A549 (cell line): ENCODE measurements at regions of chr10 and their contacts with region 1.

Region 1: GRCh38 chr10:16777473-16778370 is 39.5 kb downstream of the RSU1 start:
- DNase-seq: peak; percentile 52 to 53
- ATAC-seq: peak in 1 of 2 experiments; percentile 38; a peak in 1 of 6 replicates
- H3K4me3 ChIP-seq: no peak overlapping the region
- H3K27ac ChIP-seq: no peak overlapping the region
- H3K4me1 ChIP-seq: no peaks in the 10 kb centered on the region
- CTCF ChIP-seq: peak; percentile 78
- EP300 ChIP-seq: no peak
- POLR2A ChIP-seq: no peak
- RAD21 ChIP-seq: peak; percentile 72 to 79

Region 2: GRCh38 chr10:16756561-16757222 is 21.0 kb before region 1 on chr10:
- CTCF ChIA-PET with region 1: interaction called, 11 read pairs
- POLR2A ChIA-PET with region 1: no interaction called
- DNase-seq: no peak
- ATAC-seq: no peak
- H3K4me3 ChIP-seq: no peak overlapping the region
- H3K27ac ChIP-seq: no peak overlapping the region
- H3K4me1 ChIP-seq: no peaks in the 10 kb centered on the region
- CTCF ChIP-seq: no peak
- EP300 ChIP-seq: no peak
- POLR2A ChIP-seq: no peak
- RAD21 ChIP-seq: no peak

Region 3: DNA sequence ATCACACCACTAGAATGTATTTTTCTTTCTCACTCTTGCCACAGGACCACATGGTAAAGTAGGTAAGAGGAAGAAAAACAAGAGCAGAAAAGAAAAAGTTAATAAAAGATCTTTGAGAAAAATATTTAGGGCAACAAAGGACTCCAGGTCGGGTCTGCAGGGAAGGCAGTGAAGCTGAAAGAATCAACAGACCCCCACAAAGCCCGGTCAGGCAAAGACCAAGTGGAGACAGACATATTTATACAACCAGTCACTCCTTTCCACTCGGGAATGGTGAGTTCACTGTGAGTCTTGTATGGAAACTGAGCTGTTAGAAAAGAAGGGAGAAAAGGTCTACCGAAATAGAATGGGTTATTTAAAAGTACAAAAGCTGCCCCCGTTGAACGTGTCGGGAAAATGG is 11.5 kb after region 1 on chr10:
- CTCF ChIA-PET with region 1: interaction called, 10 read pairs
- POLR2A ChIA-PET with region 1: no interaction called
- DNase-seq: no peak
- ATAC-seq: no peak
- H3K4me3 ChIP-seq: no peak overlapping the region
- H3K27ac ChIP-seq: no peak overlapping the region
- H3K4me1 ChIP-seq: no peaks in the 10 kb centered on the region
- CTCF ChIP-seq: no peak
- EP300 ChIP-seq: no peak
- POLR2A ChIP-seq: no peak
- RAD21 ChIP-seq: no peak

Region 4: DNA sequence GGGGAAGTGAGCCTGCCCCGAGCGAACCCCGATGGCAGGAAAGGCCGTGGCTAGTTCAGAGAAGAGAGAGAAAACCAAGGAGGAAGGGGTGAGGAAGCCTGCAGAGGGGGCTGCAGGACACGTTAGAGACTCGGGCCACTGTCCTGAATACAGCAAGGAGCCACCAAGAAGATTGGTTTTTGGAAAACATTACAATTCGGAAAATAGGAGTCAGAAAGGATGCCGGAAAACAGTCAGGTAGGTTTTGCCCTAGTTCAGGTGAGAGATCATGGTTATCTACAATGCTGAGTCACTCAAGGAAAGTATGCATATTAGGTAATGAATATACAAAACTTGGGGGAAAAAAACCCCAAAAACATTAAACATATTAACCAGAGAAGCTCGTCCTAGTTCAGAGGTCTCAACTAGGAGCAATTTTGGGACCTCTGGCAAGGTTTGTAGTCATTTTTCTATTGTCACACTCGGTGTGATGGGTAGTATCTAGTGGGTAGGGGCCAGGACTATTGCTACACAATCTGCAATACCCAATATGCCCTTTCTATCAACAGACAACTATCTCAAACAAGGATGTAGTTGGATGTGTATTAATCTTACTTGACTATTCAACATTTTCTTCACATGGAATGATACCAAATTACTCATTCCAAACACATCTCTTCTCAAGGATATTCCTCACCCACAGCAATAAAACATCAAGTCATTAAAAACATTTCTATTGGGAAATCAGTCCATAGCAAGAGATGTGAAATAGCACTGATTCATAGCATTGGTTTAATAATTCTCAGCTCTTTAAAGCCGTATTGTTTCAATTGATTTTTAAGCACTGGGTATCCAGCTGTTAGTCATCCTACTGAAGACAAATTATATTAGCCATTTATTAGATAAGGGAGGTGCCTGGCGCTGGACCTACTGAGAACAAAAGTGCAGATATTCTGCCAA is 113.9 kb after region 1 on chr10:
- CTCF ChIA-PET with region 1: no interaction called
- POLR2A ChIA-PET with region 1: no interaction called
- DNase-seq: peak in 1 of 2 experiments; percentile 51
- ATAC-seq: peak; percentile 75 to 76
- H3K4me3 ChIP-seq: no peak overlapping the region
- H3K27ac ChIP-seq: peak overlapping the region in 1 of 2 experiments; percentile 52; a peak in 3 of 6 replicates
- H3K4me1 ChIP-seq: peaks cover 28% of the 10 kb centered on the region
- CTCF ChIP-seq: no peak
- EP300 ChIP-seq: peak; percentile 30 to 38; a peak in 2 of 5 replicates
- POLR2A ChIP-seq: no peak
- RAD21 ChIP-seq: peak in 1 of 2 experiments; percentile 35; a peak in 2 of 5 replicates